Vagina (tissue), 2 donors: ENCODE measurements at regions of chr9 and their contacts with region 1.

Region 1: GRCh38 chr9:126781186-126782052 is 23.4 kb upstream of the ZBTB43 start:
- DNase-seq: no peak
- H3K4me3 ChIP-seq: no peak overlapping the region
- H3K27ac ChIP-seq: no peak overlapping the region
- H3K4me1 ChIP-seq: no peaks in the 10 kb centered on the region
- H3K27me3 ChIP-seq: no peaks in the 10 kb centered on the region
- CTCF ChIP-seq: peak; percentile 85 to 96 (median 90)
- POLR2A ChIP-seq: no peak

Region 2: DNA sequence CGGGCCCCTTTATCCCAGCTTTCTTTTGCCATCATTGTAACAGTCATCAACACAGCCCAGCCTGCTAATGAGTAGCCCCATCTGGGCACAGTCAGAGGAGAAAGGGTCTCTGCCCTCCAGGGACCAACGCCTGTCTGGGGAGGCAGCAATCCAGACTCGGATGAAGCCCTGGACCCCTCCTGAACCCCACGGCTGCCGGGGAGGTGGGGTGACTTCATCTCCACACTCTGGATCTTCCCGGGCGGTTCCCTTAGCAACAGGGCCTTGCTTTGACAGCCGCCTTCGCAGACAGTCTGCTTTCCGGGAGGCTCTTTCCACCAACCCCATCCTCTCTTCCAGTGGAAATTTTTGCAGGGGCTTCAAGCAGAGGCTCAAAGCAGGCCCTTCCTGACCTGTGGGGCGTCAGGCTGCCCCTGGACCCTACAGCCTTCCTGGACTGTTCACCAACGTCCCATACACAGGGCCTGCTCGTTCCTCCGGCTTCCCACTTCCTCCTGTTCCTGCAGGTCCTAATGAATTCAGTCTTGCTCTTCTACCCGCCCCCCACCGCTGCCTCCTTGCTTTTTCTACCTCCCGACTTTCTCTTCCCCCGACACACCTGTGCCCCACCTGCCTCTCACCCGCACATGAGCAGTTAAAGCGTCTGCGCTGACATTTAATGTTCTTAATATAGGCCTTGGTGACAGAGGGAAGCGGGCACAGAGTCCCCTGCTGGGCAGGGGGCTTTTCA is 616.5 kb before region 1 on chr9:
- intact Hi-C with region 1: no loop called
- DNase-seq: peak; percentile 60 to 74
- H3K4me3 ChIP-seq: no peak overlapping the region
- H3K27ac ChIP-seq: no peak overlapping the region
- H3K4me1 ChIP-seq: no peaks in the 10 kb centered on the region
- H3K27me3 ChIP-seq: no peaks in the 10 kb centered on the region
- CTCF ChIP-seq: no peak
- POLR2A ChIP-seq: no peak

Region 3: DNA sequence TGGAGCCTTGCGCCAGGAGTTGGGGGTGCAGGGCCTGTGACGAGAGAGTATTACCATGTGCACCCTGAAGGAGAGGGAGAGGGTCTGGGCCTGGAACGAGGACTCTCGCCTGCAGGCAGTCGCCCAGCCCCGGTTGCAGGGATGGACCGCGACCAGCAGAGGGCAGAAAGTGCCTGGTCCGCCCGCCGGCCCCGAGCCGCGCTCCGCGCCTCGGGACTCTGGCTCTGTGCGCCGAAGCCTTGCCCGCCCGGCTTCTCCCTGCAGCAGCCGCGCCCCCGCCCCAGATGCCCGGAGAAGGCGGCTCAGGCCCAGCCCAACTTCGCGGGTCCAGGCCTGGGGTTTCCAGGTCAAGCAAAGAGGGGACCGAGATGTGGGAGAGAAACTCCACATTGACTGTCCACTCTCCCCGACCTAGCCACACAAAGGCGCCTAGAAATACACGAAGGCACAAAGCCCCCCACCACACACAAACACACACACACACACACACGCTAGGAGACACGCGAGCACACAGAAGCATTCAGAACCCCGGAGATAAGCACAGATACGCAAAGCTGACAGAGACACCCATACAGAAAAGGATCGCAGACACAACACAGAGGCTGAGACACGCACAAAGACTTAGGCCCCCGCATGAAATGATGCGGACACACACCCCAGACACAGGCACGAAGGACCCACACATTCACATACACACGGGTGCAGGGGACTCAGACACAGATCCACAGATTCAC is 169.7 kb before region 1 on chr9:
- intact Hi-C with region 1: loop called (anchors 1 kb)
- DNase-seq: no peak
- H3K4me3 ChIP-seq: peak overlapping the region in 1 of 2 donors; percentile 42
- H3K27ac ChIP-seq: no peak overlapping the region
- H3K4me1 ChIP-seq: peaks cover 33% of the 10 kb centered on the region
- H3K27me3 ChIP-seq: peaks cover 27% of the 10 kb centered on the region
- CTCF ChIP-seq: peak; percentile 56 to 68 (median 58)
- POLR2A ChIP-seq: no peak

Region 4: GRCh38 chr9:126704873-126705766 is 76.3 kb before region 1 on chr9:
- intact Hi-C with region 1: loop called (anchors 5 kb)
- DNase-seq: peak in 1 of 2 donors; percentile 71
- H3K4me3 ChIP-seq: peak overlapping the region in 1 of 2 donors; percentile 41
- H3K27ac ChIP-seq: no peak overlapping the region
- H3K4me1 ChIP-seq: peaks cover 15% of the 10 kb centered on the region
- H3K27me3 ChIP-seq: no peaks in the 10 kb centered on the region
- CTCF ChIP-seq: peak; percentile 71 to 92 (median 85)
- POLR2A ChIP-seq: no peak

Region 5: DNA sequence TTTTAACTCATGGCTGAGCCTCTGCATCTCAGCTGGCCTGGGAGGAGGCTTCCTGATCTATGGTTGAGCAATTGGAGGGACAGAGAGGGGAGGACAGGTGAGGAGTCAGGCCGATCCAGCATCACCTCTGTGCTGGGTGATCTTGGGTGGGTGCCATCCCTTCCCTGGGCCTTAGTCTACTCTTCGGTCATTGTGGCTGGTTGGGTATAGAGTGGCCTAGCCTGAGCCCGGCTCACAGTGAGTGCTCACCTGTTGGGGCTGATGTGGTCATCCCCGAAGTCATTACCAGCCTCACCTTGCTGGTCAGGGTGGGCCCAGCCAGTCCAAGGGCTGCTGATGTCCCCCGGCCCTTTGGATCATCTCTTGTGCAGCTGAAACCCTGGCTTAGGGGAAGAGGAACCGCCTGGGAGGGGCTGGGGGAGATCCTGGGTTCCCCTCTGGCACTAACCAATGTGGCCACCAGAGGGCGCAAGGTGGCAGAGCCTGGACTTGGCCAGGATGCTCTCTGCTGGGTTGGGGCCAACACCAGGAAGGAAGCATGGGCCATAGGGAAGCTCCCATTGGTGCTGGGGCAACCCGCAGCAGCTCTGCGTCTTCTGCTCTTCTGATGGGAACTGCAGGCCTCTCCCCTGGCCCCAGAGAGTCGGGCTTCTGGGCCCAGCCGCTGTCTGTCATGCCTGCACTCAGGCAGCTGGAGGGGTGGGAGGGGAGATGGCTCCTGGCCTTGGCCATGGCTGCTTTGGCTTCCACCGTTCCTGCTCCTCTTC is 1657.1 kb after region 1 on chr9:
- intact Hi-C with region 1: loop called (anchors 5 kb)
- DNase-seq: no peak
- H3K4me3 ChIP-seq: no peak overlapping the region
- H3K27ac ChIP-seq: peak overlapping the region; percentile 13
- H3K4me1 ChIP-seq: peaks cover 9% of the 10 kb centered on the region
- H3K27me3 ChIP-seq: no peaks in the 10 kb centered on the region
- CTCF ChIP-seq: peak; percentile 84 to 93 (median 88)
- POLR2A ChIP-seq: no peak